ENCODE measurements at regions of chr21 and their contacts with region 1.

Region 1: DNA sequence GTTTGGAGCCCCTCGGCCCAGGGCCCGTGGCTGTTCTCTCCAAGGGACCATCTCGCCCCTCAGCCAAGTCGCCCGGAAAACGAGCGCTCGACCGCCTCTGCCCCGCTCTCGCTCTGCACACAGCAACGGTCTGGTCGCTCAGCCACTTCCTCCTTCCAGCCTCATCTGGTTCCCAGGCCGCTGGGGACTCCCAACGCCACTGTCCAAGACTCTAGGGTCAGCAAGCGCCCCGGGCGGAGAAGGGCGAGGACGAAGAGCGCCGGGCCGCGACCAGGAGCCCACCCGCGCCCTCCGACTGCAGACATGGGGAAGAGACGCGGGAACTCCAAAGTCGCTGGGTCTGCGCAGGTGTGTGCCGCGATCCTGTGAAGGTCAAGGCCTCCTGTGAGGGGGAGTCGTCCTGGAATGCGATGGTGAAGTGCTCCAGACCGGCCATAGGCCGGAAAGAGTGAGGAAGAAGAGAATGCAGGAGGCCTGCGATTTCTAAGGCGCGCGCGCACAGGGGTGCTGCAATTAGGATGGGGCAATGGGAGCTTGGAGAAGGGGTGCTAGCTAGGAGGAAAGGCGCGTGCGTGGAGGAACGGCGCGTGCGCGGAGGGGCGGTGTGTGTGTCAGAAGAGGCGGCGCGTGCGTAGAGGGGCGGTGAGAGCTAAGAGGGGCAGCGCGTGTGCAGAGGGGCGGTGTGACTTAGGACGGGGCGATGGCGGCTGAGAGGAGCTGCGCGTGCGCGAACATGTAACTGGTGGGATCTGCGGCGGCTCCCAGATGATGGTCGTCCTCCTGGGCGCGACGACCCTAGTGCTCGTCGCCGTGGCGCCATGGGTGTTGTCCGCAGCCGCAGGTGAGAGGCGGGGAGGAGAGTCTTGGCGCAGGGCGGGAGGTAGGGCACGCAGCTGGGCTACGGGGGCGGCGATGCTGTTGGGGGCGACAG is at the start of gene IFNAR1:
- DNase-seq: peak; percentile 97 to 98
- ATAC-seq: peak; percentile 97 to 98
- H3K4me3 ChIP-seq: peak within 1 kb of the TSS; percentile 75 to 99 (median 94)
- H3K27ac ChIP-seq: peak within 1 kb of the TSS; percentile 93 to 99 (median 97)
- H3K4me1 ChIP-seq: peaks cover 23 to 32% of the 10 kb centered on the region in 2 donors
- H3K27me3 ChIP-seq: no peaks in the 10 kb centered on the region
- CTCF ChIP-seq: no peak
- POLR2A ChIP-seq: peak; percentile 82 to 85
- total RNA-seq, gene IFNAR1: 8.9 to 24.3 (median 9.9) TPM

Region 2: GRCh38 chr21:32770871-32771523 is 553.6 kb before region 1 on chr21:
- in situ Hi-C with region 1: no loop called
- intact Hi-C with region 1: loop called (anchors 10 kb)
- DNase-seq: peak; percentile 27 to 42
- ATAC-seq: peak; percentile 53 to 60
- H3K4me3 ChIP-seq: peak overlapping the region; percentile 83 to 94 (median 86)
- H3K27ac ChIP-seq: peak overlapping the region; percentile 87 to 95 (median 88)
- H3K4me1 ChIP-seq: peaks cover 34 to 40% of the 10 kb centered on the region in 2 donors
- H3K27me3 ChIP-seq: peaks cover 0 to 4% (median 0%) of the 10 kb centered on the region in 3 donors
- CTCF ChIP-seq: no peak
- POLR2A ChIP-seq: no peak

Region 3: DNA sequence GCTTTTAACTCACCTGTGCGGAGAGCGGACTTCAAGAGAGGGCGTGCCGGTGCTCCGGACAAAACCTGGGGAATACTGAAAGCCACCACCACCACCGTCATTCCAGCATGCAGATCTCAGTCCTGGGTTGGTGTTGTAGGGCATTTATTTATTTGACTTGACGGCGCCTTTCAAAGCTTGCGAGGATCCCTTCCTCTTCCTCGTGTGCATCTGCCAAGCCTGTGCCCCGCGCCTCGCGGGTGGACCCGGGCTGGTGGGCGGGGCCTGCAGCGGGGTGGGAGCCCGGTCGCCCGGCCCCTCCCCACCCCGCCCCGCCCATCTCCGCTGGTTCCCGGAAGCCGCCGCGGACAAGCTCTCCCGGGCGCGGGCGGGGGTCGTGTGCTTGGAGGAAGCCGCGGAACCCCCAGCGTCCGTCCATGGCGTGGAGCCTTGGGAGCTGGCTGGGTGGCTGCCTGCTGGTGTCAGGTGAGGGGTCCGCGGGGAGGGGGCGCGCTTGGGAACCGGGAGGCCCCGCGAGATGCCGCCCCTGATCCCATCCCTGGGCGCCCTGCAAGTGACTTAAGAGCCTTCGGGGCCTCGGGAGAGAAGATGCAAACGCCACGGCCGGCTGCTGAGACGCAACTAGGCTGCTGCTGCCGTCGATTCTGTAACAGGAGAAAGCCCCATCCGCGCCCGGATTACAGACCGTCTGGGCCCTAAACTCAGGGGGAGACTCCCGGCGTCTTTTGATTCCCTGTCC is 58.3 kb before region 1 on chr21 and contains the start of gene IL10RB:
- in situ Hi-C with region 1: no loop called
- intact Hi-C with region 1: loop called (anchors 2 kb)
- DNase-seq: peak; percentile 32 to 47
- ATAC-seq: peak; percentile 80
- H3K4me3 ChIP-seq: peak within 1 kb of the TSS; percentile 73 to 91 (median 86)
- H3K27ac ChIP-seq: peak within 1 kb of the TSS; percentile 82 to 84 (median 83)
- H3K4me1 ChIP-seq: peaks cover 17 to 28% of the 10 kb centered on the region in 2 donors
- H3K27me3 ChIP-seq: no peaks in the 10 kb centered on the region
- CTCF ChIP-seq: no peak
- POLR2A ChIP-seq: peak; percentile 45 to 53
- total RNA-seq, gene IL10RB: 11.4 to 17.1 (median 14.0) TPM

Region 4: GRCh38 chr21:33360881-33361602 is 36.5 kb after region 1 on chr21:
- in situ Hi-C with region 1: no loop called
- intact Hi-C with region 1: loop called (anchors 2 kb)
- DNase-seq: peak; percentile 27 to 66
- ATAC-seq: peak; percentile 82 to 95
- H3K4me3 ChIP-seq: peak overlapping the region; percentile 5 to 48 (median 26)
- H3K27ac ChIP-seq: peak overlapping the region; percentile 7 to 51 (median 30)
- H3K4me1 ChIP-seq: peaks cover 14 to 20% of the 10 kb centered on the region in 2 donors
- H3K27me3 ChIP-seq: no peaks in the 10 kb centered on the region
- CTCF ChIP-seq: peak; percentile 75 to 88 (median 84)
- POLR2A ChIP-seq: no peak

Region 5: GRCh38 chr21:33380483-33380998 is 56.0 kb after region 1 on chr21:
- in situ Hi-C with region 1: no loop called
- intact Hi-C with region 1: loop called (anchors 2 kb)
- DNase-seq: peak; percentile 86 to 92
- ATAC-seq: peak; percentile 96 to 98
- H3K4me3 ChIP-seq: no peak overlapping the region
- H3K27ac ChIP-seq: peak overlapping the region; percentile 72 to 80 (median 78)
- H3K4me1 ChIP-seq: peaks cover 18 to 34% of the 10 kb centered on the region in 2 donors
- H3K27me3 ChIP-seq: no peaks in the 10 kb centered on the region
- CTCF ChIP-seq: no peak
- POLR2A ChIP-seq: peak; percentile 27 to 41

Region 6: GRCh38 chr21:33434770-33435360 is 110.3 kb after region 1 on chr21:
- in situ Hi-C with region 1: loop called in 1 of 4 experiments (anchors 25 kb)
- intact Hi-C with region 1: no loop called
- DNase-seq: peak in 1 of 2 donors; percentile 45
- ATAC-seq: peak; percentile 99 to 100
- H3K4me3 ChIP-seq: no peak overlapping the region
- H3K27ac ChIP-seq: peak overlapping the region; percentile 70 to 90 (median 86)
- H3K4me1 ChIP-seq: peaks cover 14 to 16% of the 10 kb centered on the region in 2 donors
- H3K27me3 ChIP-seq: no peaks in the 10 kb centered on the region
- CTCF ChIP-seq: no peak
- POLR2A ChIP-seq: no peak

Region 7: GRCh38 chr21:33588485-33589335 is 264.2 kb after region 1 on chr21 and contains the start of gene DONSON:
- in situ Hi-C with region 1: no loop called
- intact Hi-C with region 1: loop called (anchors 1 kb)
- DNase-seq: peak; percentile 63 to 87
- ATAC-seq: peak; percentile 93 to 95
- H3K4me3 ChIP-seq: peak within 1 kb of the TSS; percentile 55 to 75 (median 70)
- H3K27ac ChIP-seq: peak within 1 kb of the TSS; percentile 78 to 90 (median 84)
- H3K4me1 ChIP-seq: peaks cover 10 to 14% of the 10 kb centered on the region in 2 donors
- H3K27me3 ChIP-seq: no peaks in the 10 kb centered on the region
- CTCF ChIP-seq: peak in 2 of 5 experiments; percentile 6
- POLR2A ChIP-seq: peak; percentile 55 to 68
- total RNA-seq, gene DONSON: 3.6 to 5.3 (median 4.2) TPM